A549 (cell line): ENCODE measurements at regions of chr2 and their contacts with region 1.

Region 1: DNA sequence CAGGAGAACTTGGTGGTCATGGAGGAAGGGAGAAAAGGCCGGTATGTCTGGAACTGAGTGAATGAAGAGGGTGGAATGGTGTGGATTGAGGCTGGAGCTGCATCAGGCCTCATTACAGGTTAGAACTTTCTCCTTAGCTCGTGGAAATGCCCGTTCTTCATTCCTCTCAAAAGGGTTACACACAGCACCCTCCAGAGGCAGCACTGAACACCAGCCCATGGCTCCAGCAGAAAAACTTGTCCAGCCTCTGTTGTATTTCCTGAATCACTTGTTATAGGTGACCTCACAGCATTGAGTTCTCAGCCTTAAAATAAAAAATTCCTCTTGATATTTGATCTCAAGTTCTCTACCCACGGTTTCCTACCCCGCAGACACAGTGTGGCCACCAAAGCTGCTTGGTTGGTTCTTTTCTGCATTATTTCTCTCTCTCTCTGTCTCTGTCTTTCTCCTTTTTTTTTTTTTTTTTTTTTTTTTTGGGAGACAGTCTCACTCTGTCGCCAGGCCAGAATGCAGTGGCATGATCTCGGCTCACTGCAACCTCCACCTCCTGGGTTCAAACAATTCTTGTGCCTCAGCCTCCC is 89.6 kb downstream of the ITGB1BP1 start:
- DNase-seq: peak; percentile 70 to 83
- ATAC-seq: peak; percentile 96
- H3K4me3 ChIP-seq: no peak overlapping the region
- H3K27ac ChIP-seq: peak overlapping the region; percentile 27 to 51; a peak in 3 of 6 replicates
- H3K4me1 ChIP-seq: peaks cover 15% of the 10 kb centered on the region
- CTCF ChIP-seq: peak; percentile 88
- EP300 ChIP-seq: no peak
- POLR2A ChIP-seq: no peak
- RAD21 ChIP-seq: peak; percentile 92 to 93

Region 2: DNA sequence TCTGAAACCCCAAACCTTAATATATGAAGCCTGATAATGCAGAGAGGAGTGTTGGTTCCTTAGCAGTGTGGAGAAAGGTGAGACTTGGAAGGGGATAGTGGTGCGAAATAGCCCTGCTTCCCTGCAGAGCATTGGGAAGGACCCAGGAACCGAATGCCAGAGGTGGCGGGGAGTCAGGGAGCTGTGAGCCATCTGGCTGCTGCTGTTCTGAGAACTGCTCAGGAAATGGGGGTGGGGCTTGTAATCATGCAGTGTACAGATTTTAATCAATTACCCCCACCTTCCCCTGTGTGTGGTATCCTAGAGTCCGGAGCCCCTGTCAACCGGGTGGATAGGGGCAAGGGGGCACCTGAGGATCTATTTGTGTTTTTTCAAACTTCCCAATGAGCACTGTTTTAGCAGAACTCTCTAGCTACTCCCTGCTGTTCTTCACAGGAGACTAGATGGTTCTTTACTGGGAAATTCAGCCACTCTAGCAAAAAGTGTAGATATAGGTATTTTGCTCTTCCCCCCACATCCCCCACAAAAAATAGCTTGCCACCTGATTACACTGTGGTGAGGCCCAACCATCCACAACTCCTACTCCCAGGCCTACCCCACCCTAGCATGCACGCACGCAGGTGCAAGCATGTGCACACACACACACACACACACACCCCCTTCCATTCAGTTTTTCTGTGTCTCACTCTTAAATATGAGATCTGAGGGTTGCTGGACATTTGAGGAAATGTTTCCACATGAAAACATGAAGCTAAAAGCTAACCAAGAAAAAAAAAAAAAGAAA is 300.1 kb before region 1 on chr2:
- CTCF ChIA-PET with region 1: no interaction called
- POLR2A ChIA-PET with region 1: no interaction called
- DNase-seq: no peak
- ATAC-seq: 0 out of 6 replicates have a peak, but pooled peaks of 1 of the 2 experiments have one; percentile 24
- H3K4me3 ChIP-seq: no peak overlapping the region
- H3K27ac ChIP-seq: no peak overlapping the region
- H3K4me1 ChIP-seq: peaks cover 5% of the 10 kb centered on the region; the same call in 2 of the 3 replicates
- CTCF ChIP-seq: no peak
- EP300 ChIP-seq: no peak
- POLR2A ChIP-seq: no peak
- RAD21 ChIP-seq: no peak

Region 3: DNA sequence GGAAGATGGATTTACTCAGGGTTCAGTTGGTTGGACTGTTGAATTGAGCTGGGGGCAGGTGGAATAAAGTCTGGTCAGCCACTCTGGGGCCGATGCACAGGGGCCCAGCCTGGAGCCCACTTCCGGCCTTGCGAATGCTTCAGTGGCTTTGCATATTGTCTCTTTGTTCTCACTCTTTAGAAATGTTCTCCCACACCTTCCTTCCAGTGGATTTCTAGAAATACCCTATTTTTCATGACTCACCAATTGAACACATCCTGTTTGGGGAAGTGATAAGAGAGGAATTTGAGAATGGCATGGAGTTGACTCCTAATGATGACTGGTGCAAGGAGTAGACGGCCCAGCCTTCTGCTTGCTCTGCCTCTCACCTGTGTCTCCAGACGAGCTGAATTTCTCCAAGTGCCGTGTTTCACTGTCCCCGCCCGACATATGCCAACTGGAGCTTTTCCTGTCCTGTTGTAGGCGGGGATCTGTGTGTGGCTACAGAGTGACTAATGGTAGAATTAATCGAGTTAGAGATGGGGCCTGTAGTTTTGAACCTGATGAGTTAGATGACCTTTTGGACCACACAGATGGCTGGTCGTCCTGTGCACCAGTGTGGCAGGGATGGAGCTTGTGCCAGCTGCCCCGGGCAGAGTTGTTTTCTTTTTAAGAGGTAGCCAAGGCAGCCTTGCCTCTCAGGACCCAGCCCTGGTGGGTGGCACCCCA is 98.8 kb before region 1 on chr2:
- CTCF ChIA-PET with region 1: interaction called, 20 read pairs
- POLR2A ChIA-PET with region 1: no interaction called
- DNase-seq: peak; percentile 85 to 89
- ATAC-seq: peak; percentile 69 to 87
- H3K4me3 ChIP-seq: peak overlapping the region; percentile 3; the same call in 1 of the 3 replicates
- H3K27ac ChIP-seq: peak overlapping the region; percentile 73 to 88
- H3K4me1 ChIP-seq: peaks cover 68% of the 10 kb centered on the region
- CTCF ChIP-seq: no peak
- EP300 ChIP-seq: peak in 1 of 2 experiments; percentile 62; a peak in 2 of 5 replicates
- POLR2A ChIP-seq: no peak
- RAD21 ChIP-seq: no peak

Region 4: GRCh38 chr2:9297156-9297555 is 36.5 kb before region 1 on chr2:
- CTCF ChIA-PET with region 1: interaction called, 12 read pairs
- POLR2A ChIA-PET with region 1: no interaction called
- DNase-seq: no peak
- ATAC-seq: no peak
- H3K4me3 ChIP-seq: no peak overlapping the region
- H3K27ac ChIP-seq: no peak overlapping the region
- H3K4me1 ChIP-seq: no peaks in the 10 kb centered on the region
- CTCF ChIP-seq: no peak
- EP300 ChIP-seq: no peak
- POLR2A ChIP-seq: no peak
- RAD21 ChIP-seq: no peak

Region 5: GRCh38 chr2:9346885-9347284 is 13.2 kb after region 1 on chr2:
- CTCF ChIA-PET with region 1: interaction called, 23 read pairs
- POLR2A ChIA-PET with region 1: no interaction called
- DNase-seq: no peak
- ATAC-seq: no peak; a peak in 1 of 6 replicates
- H3K4me3 ChIP-seq: no peak overlapping the region
- H3K27ac ChIP-seq: no peak overlapping the region
- H3K4me1 ChIP-seq: peaks cover 20% of the 10 kb centered on the region
- CTCF ChIP-seq: no peak
- EP300 ChIP-seq: no peak
- POLR2A ChIP-seq: no peak
- RAD21 ChIP-seq: no peak